PC-3 (cell line): ENCODE measurements at regions of chr5 and their contacts with region 1.

Region 1: DNA sequence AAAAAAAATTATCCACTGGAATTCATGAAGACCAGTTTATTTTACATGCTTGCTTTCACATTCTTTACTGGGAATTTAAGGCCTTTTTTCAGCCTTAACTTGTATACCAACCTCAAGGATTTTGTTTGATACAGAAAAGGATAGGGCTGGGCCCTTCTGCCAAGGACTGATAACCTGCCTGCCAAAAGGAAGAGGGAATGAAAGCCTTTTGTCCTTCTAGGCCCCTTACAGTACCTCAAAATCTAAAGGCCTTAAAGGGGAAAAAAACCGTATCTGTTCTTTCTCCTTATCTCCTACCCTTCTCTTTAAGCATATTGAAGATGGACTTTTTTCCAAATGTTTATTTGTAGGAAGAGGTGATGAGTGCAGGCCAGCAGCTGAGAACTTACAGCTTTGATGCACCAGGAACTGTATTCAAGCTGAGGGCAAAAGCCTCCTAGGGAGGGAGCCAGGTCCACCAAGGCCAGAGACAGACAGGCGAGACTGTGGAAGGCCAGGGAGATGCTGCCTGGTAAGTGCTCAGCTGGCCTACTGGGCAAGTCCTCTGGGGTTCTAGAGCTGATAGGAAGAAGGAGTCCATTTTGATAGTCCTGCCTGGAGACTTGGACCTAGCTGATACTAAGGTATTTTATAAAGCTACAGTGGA is 31.8 kb downstream of the FAXDC2 start:
- DNase-seq: no peak
- ATAC-seq: no peak
- H3K4me3 ChIP-seq: no peak overlapping the region
- H3K27ac ChIP-seq: no peak overlapping the region
- H3K4me1 ChIP-seq: no peaks in the 10 kb centered on the region
- H3K27me3 ChIP-seq: no peaks in the 10 kb centered on the region
- CTCF ChIP-seq: no peak

Region 2: DNA sequence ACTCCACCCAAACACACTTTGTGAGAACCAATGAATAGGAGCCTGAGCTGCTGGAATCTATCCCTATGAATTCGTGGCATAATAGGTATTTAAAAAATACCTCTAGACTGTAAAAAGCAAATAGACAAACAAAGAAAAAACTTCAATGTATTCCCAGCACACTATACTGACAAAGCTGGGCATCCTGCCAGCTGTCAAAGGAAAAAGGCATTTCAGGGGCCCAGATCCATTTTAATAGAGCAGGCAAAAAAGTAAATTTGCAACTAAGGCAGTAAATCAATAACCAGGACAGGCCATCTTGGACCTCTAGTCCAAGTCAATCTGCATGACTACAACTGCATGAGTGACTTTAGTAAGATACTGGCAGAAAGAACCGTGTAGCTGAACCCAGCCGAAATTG is 89.0 kb before region 1 on chr5:
- CTCF ChIA-PET with region 1: no interaction called
- POLR2A ChIA-PET with region 1: interaction called, 10 read pairs
- intact Hi-C with region 1: no loop called
- DNase-seq: no peak
- ATAC-seq: no peak
- H3K4me3 ChIP-seq: no peak overlapping the region
- H3K27ac ChIP-seq: no peak overlapping the region
- H3K4me1 ChIP-seq: no peaks in the 10 kb centered on the region
- H3K27me3 ChIP-seq: no peaks in the 10 kb centered on the region
- CTCF ChIP-seq: no peak

Region 3: DNA sequence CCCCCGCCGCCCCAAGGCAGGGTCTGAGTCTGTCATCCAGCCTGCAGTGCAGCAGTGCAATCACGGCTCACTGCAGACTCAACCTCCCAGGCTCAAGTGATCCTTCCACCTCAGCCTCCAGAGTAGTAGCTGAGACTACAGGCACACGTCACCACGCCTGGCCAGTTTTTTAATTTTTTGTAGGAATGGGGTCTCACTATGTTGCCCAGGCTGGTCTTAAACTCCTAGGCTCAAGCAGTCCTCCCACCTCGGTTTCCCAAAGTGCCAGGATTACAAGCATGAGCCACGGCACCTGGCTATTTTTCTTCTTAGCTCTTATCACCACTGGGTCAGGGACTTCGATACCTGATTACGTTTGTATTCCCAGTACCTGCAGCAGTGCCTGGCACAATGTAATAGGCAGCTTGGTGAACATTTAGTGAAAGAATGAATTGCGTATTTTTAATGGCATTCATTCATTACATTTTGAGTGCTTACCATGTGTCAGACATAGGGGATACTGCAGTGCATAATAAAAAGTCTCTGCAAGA is 53.1 kb before region 1 on chr5:
- CTCF ChIA-PET with region 1: no interaction called
- POLR2A ChIA-PET with region 1: no interaction called
- intact Hi-C with region 1: no loop called
- DNase-seq: no peak
- ATAC-seq: no peak
- H3K4me3 ChIP-seq: no peak overlapping the region
- H3K27ac ChIP-seq: no peak overlapping the region
- H3K4me1 ChIP-seq: peaks cover 6% of the 10 kb centered on the region
- H3K27me3 ChIP-seq: no peaks in the 10 kb centered on the region
- CTCF ChIP-seq: no peak